Activated CD4-positive, alpha-beta T cell treated with anti-CD3 and anti-CD28 coated beads for 36 hours (primary cell): ENCODE measurements at regions of chr13 and their contacts with region 1.

Region 1: DNA sequence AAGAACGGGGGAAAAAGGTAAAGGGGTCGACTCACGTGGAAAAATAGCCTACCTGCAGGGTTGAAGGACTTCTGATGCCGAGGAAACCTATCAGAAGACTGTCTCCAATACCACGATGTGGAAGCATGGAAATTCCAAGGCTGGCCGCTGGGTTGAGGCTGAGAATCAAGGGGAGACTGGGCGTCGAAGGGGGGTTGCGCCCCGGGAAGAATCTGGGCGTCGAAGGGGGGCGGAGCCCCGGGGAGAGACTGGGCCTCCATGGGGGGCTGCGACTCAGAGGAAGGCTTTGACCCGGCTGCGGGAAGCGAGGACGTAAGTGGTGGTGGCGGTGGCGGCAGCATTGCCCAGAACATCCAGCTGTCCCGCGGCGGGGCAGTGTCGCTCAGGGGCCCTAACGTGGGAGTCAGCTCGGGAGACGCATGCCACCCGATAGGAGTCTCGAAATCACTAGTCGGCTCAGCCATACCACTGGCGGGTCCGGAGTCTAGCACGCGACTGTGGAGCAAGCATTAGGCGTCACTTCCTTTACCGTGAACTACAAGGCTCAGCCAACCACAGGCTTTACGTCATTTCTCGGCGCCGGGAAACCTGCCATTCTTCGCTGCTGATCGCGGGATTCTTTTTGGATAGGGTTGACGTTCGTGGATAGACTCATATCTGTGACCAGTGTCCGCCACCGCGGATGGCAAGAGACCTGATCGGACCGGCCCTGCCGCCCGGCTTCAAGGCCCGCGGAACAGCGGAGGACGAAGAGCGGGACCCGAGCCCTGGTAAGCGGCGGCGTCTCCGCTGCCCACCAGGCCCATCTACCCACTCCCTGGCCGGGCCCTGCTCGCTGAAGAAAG is at the starts of genes GPALPP1 and NUFIP1:
- DNase-seq: peak; percentile 97
- ATAC-seq: peak; percentile 99
- H3K4me3 Mint-ChIP-seq: peak within 1 kb of the TSS; percentile 98
- H3K27ac Mint-ChIP-seq: peak within 1 kb of the TSS; percentile 96
- H3K4me1 Mint-ChIP-seq: peaks cover 57% of the 10 kb centered on the region
- H3K27me3 Mint-ChIP-seq: no peaks in the 10 kb centered on the region
- total RNA-seq, gene GPALPP1: 31.8 to 40.5 TPM
- total RNA-seq, gene NUFIP1: 10.1 to 13.6 TPM

Region 2: DNA sequence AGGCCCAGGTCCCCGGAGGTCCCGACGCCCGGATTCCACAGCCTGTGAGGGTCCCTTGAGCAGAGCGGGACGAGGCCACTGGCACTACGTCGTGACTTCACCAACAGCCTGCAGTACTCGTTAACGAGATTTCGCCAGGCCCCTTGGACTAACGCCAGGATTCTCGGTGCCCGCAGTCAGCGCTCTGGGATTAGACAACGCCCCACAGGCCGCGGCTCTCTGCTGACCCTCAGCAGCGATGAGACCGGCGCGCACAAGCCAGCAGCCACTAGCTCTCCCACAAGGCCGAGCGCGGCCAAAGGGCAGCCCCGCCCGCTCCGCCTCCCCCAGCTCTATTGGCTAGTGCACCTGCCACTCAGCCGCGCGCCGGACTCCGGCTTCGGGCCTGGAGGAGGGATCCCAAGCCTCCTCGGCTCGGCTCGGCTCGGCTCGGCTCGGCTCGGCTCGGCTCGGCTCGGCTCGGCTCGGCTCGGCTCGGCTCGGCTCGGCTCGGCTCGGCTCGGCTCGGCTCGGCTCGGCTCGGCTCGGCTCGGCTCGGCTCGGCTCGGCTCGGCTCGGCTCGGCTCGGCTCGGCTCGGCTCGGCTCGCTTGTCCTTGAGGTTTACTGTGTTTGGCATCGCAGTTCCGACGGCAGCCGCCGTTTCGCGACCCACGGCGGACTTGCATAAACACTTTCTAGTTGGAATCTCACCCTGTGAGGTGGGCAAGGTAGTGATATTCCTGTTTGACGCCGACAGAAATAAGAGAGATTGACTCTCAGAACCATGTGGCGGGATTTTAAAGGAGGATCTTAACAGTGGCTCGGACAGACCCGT is 847.3 kb before region 1 on chr13:
- CTCF ChIA-PET with region 1: no interaction called
- POLR2A ChIA-PET with region 1: no interaction called
- intact Hi-C with region 1: loop called in 1 of 2 experiments (anchors 1 kb)
- DNase-seq: peak; percentile 96
- ATAC-seq: peak; percentile 100
- H3K4me3 Mint-ChIP-seq: peak overlapping the region; percentile 87
- H3K27ac Mint-ChIP-seq: peak overlapping the region; percentile 90
- H3K4me1 Mint-ChIP-seq: peaks cover 15% of the 10 kb centered on the region
- H3K27me3 Mint-ChIP-seq: peaks cover 4% of the 10 kb centered on the region

Region 3: GRCh38 chr13:44484562-44485138 is 504.5 kb before region 1 on chr13:
- CTCF ChIA-PET with region 1: no interaction called
- POLR2A ChIA-PET with region 1: no interaction called
- intact Hi-C with region 1: loop called in 1 of 2 experiments (anchors 5 kb)
- DNase-seq: no peak
- ATAC-seq: peak; percentile 44
- H3K4me3 Mint-ChIP-seq: peak overlapping the region; percentile 38
- H3K27ac Mint-ChIP-seq: peak overlapping the region; percentile 20
- H3K4me1 Mint-ChIP-seq: peaks cover 13% of the 10 kb centered on the region
- H3K27me3 Mint-ChIP-seq: no peaks in the 10 kb centered on the region

Region 4: GRCh38 chr13:45119991-45120864 is 131.0 kb after region 1 on chr13 and contains the start of gene GTF2F2:
- CTCF ChIA-PET with region 1: no interaction called
- POLR2A ChIA-PET with region 1: no interaction called
- intact Hi-C with region 1: loop called in 1 of 2 experiments (anchors 2 kb)
- DNase-seq: peak; percentile 90
- ATAC-seq: peak; percentile 68
- H3K4me3 Mint-ChIP-seq: no peak within 1 kb of the TSS
- H3K27ac Mint-ChIP-seq: no peak within 1 kb of the TSS
- H3K4me1 Mint-ChIP-seq: peaks cover 5% of the 10 kb centered on the region
- H3K27me3 Mint-ChIP-seq: no peaks in the 10 kb centered on the region
- total RNA-seq, gene GTF2F2: 19.9 to 25.6 TPM

Region 5: DNA sequence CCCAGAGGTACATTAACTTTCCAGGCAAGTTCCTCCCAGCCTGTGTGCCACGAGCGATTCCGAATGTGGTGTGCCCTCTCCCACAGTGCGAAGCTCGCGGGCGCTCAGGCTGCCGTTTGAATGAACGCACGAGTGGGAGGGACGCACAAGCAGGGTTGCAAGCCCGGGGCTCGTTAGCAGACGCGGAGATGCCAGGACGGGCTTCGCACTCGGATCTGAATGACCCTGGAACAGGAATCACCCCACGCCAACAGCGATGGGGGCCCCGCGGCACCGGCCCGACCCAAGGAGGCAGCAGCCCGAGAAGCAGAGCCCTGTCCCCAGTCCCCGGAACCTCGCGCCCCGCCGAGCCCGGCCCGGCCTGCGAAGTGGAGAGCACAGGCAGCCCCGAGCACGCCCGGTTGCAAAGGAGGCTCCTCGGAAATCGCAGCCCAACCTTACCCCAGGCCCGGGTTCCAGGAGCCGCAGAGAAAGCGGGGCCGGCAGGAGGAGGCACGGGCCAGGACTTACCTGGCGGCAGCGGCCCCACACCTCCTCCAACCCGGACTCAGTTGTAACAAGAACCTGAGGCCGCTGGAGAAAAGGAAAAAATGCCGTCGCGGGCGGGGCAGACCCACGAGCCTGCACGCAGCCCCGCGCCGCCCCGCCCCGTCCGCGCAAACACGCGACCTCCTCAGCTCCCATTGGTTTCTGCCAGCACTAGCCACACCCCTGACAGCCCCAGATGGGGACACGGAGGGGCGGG is 428.8 kb after region 1 on chr13 and contains the start of gene SLC25A30:
- CTCF ChIA-PET with region 1: no interaction called
- POLR2A ChIA-PET with region 1: no interaction called
- intact Hi-C with region 1: loop called in 1 of 2 experiments (anchors 1 kb)
- DNase-seq: peak; percentile 94
- ATAC-seq: peak; percentile 92
- H3K4me3 Mint-ChIP-seq: peak within 1 kb of the TSS; percentile 84
- H3K27ac Mint-ChIP-seq: peak within 1 kb of the TSS; percentile 92
- H3K4me1 Mint-ChIP-seq: peaks cover 23% of the 10 kb centered on the region
- H3K27me3 Mint-ChIP-seq: no peaks in the 10 kb centered on the region
- total RNA-seq, gene SLC25A30: 17.7 to 18.4 TPM

Region 6: GRCh38 chr13:45464687-45465453 is 475.7 kb after region 1 on chr13 and contains the start of gene COG3:
- CTCF ChIA-PET with region 1: no interaction called
- POLR2A ChIA-PET with region 1: no interaction called
- intact Hi-C with region 1: loop called in 1 of 2 experiments (anchors 1 kb)
- DNase-seq: peak; percentile 97
- ATAC-seq: peak; percentile 99
- H3K4me3 Mint-ChIP-seq: peak within 1 kb of the TSS; percentile 93
- H3K27ac Mint-ChIP-seq: peak within 1 kb of the TSS; percentile 93
- H3K4me1 Mint-ChIP-seq: peaks cover 49% of the 10 kb centered on the region
- H3K27me3 Mint-ChIP-seq: no peaks in the 10 kb centered on the region
- total RNA-seq, gene COG3: 18.0 to 19.6 TPM

Region 7: GRCh38 chr13:46052319-46053161 is 1063.3 kb after region 1 on chr13 and contains the start of gene ZC3H13:
- CTCF ChIA-PET with region 1: no interaction called
- POLR2A ChIA-PET with region 1: no interaction called
- intact Hi-C with region 1: loop called in 1 of 2 experiments (anchors 1 kb)
- DNase-seq: peak; percentile 96
- ATAC-seq: peak; percentile 99
- H3K4me3 Mint-ChIP-seq: peak within 1 kb of the TSS; percentile 83
- H3K27ac Mint-ChIP-seq: peak within 1 kb of the TSS; percentile 94
- H3K4me1 Mint-ChIP-seq: peaks cover 34% of the 10 kb centered on the region
- H3K27me3 Mint-ChIP-seq: peaks cover 2% of the 10 kb centered on the region
- total RNA-seq, gene ZC3H13: 38.5 to 52.8 TPM